GM12878 (cell line): ENCODE measurements at regions of chr20 and their contacts with region 1.

Region 1: DNA sequence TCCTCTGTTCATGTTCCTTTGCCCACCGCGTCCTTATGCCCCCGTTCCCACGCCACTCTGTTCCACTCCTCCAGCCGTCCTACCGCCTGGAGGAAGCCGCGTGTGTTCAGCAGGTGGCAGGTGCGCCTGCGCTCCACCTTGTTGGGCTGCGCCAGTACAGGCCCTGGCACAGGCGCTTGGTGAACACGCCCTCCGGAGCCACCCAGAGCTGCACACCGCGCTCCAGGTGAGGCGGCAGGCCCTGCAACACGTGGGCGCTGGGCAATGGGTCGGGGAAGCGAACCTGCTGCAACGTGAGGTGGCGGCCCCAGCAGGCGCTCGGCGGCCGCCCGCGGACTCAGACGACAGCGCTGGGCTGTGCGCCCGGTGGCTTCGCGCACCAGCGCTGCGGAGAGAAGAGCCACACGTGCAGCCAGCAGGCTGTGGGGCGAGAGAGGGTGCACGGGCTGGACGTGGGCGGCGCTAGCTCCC is 4.1 kb upstream of the FOXS1 start:
- DNase-seq: no peak
- ATAC-seq: no peak
- H3K4me3 ChIP-seq: no peak overlapping the region
- H3K27ac ChIP-seq: no peak overlapping the region
- H3K4me1 ChIP-seq: peaks cover 5% of the 10 kb centered on the region; the same call in 1 of the 2 replicates
- H3K27me3 ChIP-seq: no peaks in the 10 kb centered on the region; a peak in 2 of 4 replicates
- CTCF ChIP-seq: no peak
- EP300 ChIP-seq: no peak
- POLR2A ChIP-seq: no peak
- RAD21 ChIP-seq: no peak

Region 2: DNA sequence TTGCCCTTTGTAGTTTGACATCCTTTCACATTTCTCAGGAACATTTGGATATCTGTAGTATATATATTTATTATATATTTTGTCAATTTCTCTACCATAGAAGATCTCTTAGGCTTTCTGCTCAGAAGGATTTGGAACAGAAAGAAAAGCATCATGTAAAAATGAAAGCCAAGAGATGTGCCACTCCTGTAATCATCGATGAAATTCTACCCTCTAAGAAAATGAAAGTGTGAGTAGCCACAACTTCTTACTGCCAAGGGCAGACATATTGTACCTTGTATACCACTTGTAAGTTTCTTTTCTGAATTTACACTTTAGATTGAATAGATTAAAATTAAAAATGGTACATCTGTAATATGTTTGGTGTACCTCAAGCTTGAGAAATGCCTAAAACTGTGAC is 79.2 kb before region 1 on chr20:
- CTCF ChIA-PET with region 1: no interaction called
- POLR2A ChIA-PET with region 1: no interaction called
- RAD21 ChIA-PET with region 1: no interaction called
- SMC1A ChIA-PET with region 1: no interaction called
- in situ Hi-C with region 1: no loop called
- intact Hi-C with region 1: no loop called
- DNase-seq: no peak
- ATAC-seq: no peak
- H3K4me3 ChIP-seq: no peak overlapping the region
- H3K27ac ChIP-seq: no peak overlapping the region
- H3K4me1 ChIP-seq: no peaks in the 10 kb centered on the region
- H3K27me3 ChIP-seq: no peaks in the 10 kb centered on the region
- CTCF ChIP-seq: no peak
- EP300 ChIP-seq: no peak
- POLR2A ChIP-seq: no peak
- RAD21 ChIP-seq: no peak

Region 3: GRCh38 chr20:31822421-31823330 is 26.8 kb before region 1 on chr20:
- CTCF ChIA-PET with region 1: interaction called, 109 read pairs
- POLR2A ChIA-PET with region 1: no interaction called
- RAD21 ChIA-PET with region 1: interaction called, 25 read pairs
- SMC1A ChIA-PET with region 1: interaction called, 7 read pairs
- in situ Hi-C with region 1: no loop called
- intact Hi-C with region 1: loop called (anchors 1 kb)
- DNase-seq: no peak
- ATAC-seq: peak; percentile 97
- H3K4me3 ChIP-seq: no peak overlapping the region
- H3K27ac ChIP-seq: no peak overlapping the region
- H3K4me1 ChIP-seq: no peaks in the 10 kb centered on the region
- H3K27me3 ChIP-seq: no peaks in the 10 kb centered on the region
- CTCF ChIP-seq: peak; percentile 96 to 98 (median 98); a peak in 5 of 6 replicates
- EP300 ChIP-seq: no peak
- POLR2A ChIP-seq: no peak
- RAD21 ChIP-seq: peak; percentile 86

Region 4: GRCh38 chr20:31835977-31836852 is 13.3 kb before region 1 on chr20:
- CTCF ChIA-PET with region 1: interaction called, 37 read pairs
- POLR2A ChIA-PET with region 1: no interaction called
- RAD21 ChIA-PET with region 1: interaction called, 4 read pairs
- SMC1A ChIA-PET with region 1: interaction called, 13 read pairs
- in situ Hi-C with region 1: no loop called
- intact Hi-C with region 1: no loop called
- DNase-seq: peak; percentile 23
- ATAC-seq: peak; percentile 88
- H3K4me3 ChIP-seq: no peak overlapping the region
- H3K27ac ChIP-seq: no peak overlapping the region
- H3K4me1 ChIP-seq: peaks cover 8% of the 10 kb centered on the region; the same call in 1 of the 2 replicates
- H3K27me3 ChIP-seq: no peaks in the 10 kb centered on the region
- CTCF ChIP-seq: no peak
- EP300 ChIP-seq: no peak
- POLR2A ChIP-seq: no peak
- RAD21 ChIP-seq: no peak

Region 5: GRCh38 chr20:31869942-31870725 is 20.6 kb after region 1 on chr20 and contains the starts of genes DUSP15 and TTLL9:
- CTCF ChIA-PET with region 1: interaction called, 22 read pairs
- POLR2A ChIA-PET with region 1: interaction called, 4 read pairs
- RAD21 ChIA-PET with region 1: interaction called, 9 read pairs
- SMC1A ChIA-PET with region 1: interaction called, 11 read pairs
- in situ Hi-C with region 1: no loop called
- intact Hi-C with region 1: no loop called
- DNase-seq: no peak
- ATAC-seq: peak; percentile 65
- H3K4me3 ChIP-seq: peak within 1 kb of the TSS; percentile 41; the same call in 1 of the 2 replicates
- H3K27ac ChIP-seq: no peak within 1 kb of the TSS
- H3K4me1 ChIP-seq: peaks cover 13% of the 10 kb centered on the region
- H3K27me3 ChIP-seq: peaks cover 6 to 13% of the 10 kb centered on the region in 2 experiments
- CTCF ChIP-seq: no peak
- EP300 ChIP-seq: no peak
- POLR2A ChIP-seq: peak; percentile 25; the same call in 1 of the 2 replicates
- RAD21 ChIP-seq: no peak
- polyA plus RNA-seq, gene DUSP15: 0.06 TPM in 1 of 2 experiments, not detected in the other
- polyA plus RNA-seq, gene TTLL9: 0.03 TPM in 1 of 2 experiments, not detected in the other

Region 6: GRCh38 chr20:32012159-32012688 is 162.7 kb after region 1 on chr20:
- CTCF ChIA-PET with region 1: interaction called, 10 read pairs
- POLR2A ChIA-PET with region 1: interaction called, 3 read pairs
- RAD21 ChIA-PET with region 1: no interaction called
- SMC1A ChIA-PET with region 1: interaction called, 4 read pairs
- in situ Hi-C with region 1: no loop called
- intact Hi-C with region 1: loop called (anchors 5 kb)
- DNase-seq: no peak
- ATAC-seq: no peak
- H3K4me3 ChIP-seq: no peak overlapping the region
- H3K27ac ChIP-seq: no peak overlapping the region
- H3K4me1 ChIP-seq: no peaks in the 10 kb centered on the region
- H3K27me3 ChIP-seq: peaks cover 0 to 1% of the 10 kb centered on the region in 2 experiments; a peak in 3 of 4 replicates
- CTCF ChIP-seq: no peak
- EP300 ChIP-seq: no peak
- POLR2A ChIP-seq: no peak
- RAD21 ChIP-seq: no peak